Activated CD8-positive, alpha-beta T cell treated with anti-CD3 and anti-CD28 coated beads, Interleukin-2, amount 10 ng/mL, durations not matched to agents 7 days and 5 days (primary cell): ENCODE measurements at regions of chr12 and their contacts with region 1.

Region 1: DNA sequence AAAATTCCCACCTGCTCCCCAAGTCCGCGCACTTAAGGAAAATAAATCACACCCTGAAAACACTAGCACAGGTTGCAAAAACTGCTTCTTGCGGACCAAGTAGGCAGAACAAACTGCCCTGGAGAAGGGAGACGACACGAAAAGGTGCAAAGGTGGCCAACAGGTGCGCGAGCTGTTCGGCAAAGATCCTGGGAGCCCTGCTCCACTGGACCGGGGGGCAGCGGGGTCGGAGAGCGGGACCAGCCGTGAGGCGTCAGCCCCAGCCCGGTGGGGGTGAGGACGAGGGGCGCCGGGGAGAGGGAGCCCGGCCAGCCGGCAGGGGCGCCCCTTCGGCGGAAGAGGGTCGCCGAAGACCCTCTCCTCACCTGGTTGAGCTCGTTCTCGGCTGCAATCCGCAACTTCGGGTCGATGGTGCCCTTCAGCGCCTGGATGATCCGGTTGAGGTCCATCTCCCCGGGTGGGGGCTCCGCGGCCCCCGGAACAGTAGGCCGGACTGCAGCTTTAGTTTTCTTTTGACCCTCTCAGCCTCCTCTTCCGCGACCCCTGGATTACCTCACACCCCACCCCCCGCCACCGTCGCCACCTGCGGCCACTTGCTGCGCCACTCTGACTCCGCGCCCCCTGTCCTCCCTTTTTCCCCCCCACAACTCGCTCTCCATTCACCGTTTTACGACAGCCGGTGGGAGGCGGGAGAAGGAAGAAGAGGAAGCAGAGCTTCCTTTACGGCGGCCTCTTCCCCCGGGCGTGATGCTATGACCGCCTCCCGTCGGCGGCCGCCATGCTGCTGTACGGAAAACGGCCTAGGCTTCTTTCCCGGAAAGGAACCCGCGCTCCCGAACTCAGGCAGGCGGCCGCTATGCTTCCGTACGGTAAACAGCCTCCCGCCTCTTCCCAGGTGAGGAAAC is at the start of gene IPO8:
- DNase-seq: peak; percentile 87
- ATAC-seq: peak; percentile 92
- H3K4me3 Mint-ChIP-seq: peak within 1 kb of the TSS; percentile 92
- H3K27ac Mint-ChIP-seq: peak within 1 kb of the TSS; percentile 91
- H3K4me1 Mint-ChIP-seq: peaks cover 31% of the 10 kb centered on the region
- H3K27me3 Mint-ChIP-seq: peaks cover 11% of the 10 kb centered on the region
- total RNA-seq, gene IPO8: 50.8 to 52.2 TPM

Region 2: GRCh38 chr12:30707613-30708342 is 12.3 kb after region 1 on chr12:
- CTCF ChIA-PET with region 1: interaction called, 19 read pairs
- POLR2A ChIA-PET with region 1: interaction called, 5 read pairs
- DNase-seq: no peak
- ATAC-seq: no peak
- H3K4me3 Mint-ChIP-seq: no peak overlapping the region
- H3K27ac Mint-ChIP-seq: no peak overlapping the region
- H3K4me1 Mint-ChIP-seq: no peaks in the 10 kb centered on the region
- H3K27me3 Mint-ChIP-seq: no peaks in the 10 kb centered on the region